ENCODE measurements at regions of chr4 and their contacts with region 1.

Region 1: GRCh38 chr4:139744209-139744608 is 78.6 kb downstream of the MGST2 start:
- DNase-seq: no peak

Region 2: DNA sequence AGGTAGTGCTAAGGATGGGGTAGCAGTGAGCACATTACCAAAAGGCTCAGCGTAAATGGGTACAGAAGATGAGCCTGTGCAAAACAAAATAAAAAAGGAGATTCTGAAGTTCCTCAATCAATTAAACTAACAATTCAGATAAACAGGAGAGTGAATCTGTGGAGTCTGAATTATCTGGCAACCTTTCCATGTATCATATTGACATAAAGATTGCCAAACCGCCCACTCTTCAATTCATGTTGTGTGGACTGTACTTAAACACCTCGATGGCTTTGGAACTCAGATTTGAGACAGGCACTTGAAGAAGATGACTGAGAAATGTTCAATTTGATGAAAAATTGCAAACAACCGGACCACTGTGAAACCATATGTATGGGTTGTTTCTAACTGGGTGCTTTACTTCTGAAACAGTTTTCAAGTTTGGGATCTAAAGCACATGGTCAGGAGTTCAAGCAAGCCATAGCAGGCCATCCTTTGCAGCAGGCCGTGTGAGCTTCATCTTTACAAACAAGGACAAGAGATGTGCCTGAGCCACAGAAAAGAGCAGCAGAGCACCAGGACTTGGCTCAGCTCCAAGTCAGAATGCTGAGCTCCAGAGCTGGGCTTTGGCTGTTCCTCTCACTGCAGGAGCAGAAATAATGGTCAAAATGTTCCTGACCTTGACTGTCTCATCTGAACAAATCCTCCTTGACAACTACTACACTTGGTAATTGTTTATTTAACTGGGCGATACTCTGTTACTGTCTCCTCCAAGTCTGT is 29.5 kb after region 1 on chr4:
- intact Hi-C with region 1: no loop called
- DNase-seq: no peak

Region 3: DNA sequence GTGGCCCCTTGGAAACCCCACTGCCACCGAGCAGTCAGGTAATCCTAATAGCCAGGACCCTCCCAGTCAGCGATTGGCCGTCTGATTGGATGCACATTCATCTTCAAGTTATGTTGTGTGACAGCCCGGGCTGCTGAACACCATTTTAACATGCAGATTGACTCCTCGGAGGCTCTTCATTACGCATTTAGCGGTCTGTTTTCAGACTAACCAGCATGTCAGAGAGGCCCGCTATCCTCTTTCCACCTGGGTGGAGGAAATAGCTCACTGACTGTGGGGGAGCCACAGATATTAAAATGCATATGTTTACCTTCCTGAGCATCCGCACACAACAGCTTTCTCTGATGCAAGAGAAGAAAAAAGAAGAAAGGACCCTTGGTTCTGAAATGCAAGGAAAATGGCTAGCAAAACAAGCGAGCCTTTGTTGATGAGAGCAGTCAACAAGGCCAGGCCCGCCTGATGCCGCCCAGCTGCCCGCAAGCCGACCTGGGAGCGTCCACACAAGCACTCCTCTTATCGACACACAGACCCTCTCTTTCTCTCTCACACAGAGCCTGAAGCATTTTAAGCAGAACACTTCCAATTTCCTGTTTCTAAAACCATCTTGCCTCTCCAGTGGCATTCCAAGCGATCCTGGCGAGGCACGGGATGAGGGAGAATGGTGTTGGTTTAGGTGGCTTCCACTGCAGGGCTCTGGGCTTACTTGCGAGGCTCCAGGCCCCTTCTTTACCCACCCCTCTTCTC is 39.7 kb after region 1 on chr4:
- intact Hi-C with region 1: loop called in 1 of 2 experiments (anchors 1 kb)
- DNase-seq: no peak

Measured in posterior vena cava (tissue), 2 donors.